ENCODE measurements at regions of chr2 and their contacts with region 1.

Region 1: DNA sequence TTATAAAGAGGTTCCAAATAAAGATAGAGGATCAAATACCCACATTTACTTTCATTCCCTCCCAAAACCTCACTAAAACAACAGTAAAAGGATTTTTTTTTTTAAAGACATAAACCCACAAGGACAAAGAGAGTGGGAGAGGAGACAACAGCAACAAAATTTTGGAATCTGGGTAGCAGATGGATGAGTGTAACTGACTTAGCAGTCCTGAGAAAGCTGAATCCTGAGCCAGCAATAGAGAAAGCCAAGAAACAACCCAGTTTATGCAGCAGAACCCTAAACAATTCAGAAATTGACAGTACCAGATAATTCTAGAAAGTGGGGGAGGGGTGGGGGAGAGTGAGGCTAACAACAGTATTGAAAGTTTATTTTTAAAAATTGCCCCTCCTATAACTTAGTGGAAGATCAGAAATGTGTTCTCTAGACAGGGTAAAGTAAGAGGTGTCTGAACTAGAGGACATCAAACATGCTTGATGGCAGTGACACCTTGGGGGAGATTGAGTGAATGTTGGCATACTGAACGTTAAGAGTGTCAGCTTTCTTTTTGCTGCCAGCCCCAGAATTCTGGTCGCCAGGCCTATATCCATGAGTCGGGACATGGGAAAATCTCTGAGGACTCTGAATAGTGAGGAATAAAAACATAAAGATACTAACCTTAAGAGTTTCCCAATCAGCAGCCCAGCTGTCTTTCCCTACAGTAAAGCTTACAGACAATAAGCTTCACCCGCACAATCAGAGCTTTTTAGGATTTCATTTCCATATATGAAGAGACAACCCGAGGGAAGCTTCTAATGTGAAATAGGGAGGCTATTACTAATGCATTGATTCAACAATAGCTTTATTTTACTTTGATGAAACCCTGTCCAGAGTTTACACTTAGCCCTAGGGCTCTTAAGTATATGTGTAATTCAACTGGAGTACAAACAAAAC is 128.0 kb upstream of the ALPP start:
- DNase-seq: no peak
- ATAC-seq: no peak
- H3K4me3 Mint-ChIP-seq: no peak overlapping the region
- H3K27ac Mint-ChIP-seq: no peak overlapping the region
- H3K4me1 Mint-ChIP-seq: no peaks in the 10 kb centered on the region
- H3K27me3 Mint-ChIP-seq: no peaks in the 10 kb centered on the region
- CTCF ChIP-seq: no peak

Region 2: DNA sequence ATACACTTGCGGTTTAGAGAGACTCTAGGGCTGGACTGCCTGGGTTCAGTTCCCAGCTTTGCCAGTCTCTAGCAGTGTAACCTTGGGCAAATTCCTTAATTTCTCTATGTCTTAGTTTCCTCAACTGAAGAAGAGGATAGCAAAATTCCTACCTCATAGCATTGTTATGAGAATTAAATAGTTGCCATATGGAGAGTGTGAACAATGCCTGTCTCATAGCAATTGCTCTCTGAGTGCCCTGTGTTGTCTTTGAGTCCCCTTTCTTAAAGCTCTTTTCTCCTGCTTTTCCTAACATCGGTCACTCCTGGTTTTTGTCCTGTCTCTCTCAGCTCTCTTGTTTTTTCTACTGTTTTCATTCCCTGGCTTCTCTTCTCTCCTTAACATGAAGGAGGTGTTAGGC is 11.3 kb after region 1 on chr2:
- CTCF ChIA-PET with region 1: no interaction called
- POLR2A ChIA-PET with region 1: no interaction called
- intact Hi-C with region 1: no loop called
- DNase-seq: no peak
- ATAC-seq: no peak
- H3K4me3 Mint-ChIP-seq: no peak overlapping the region
- H3K27ac Mint-ChIP-seq: no peak overlapping the region
- H3K4me1 Mint-ChIP-seq: no peaks in the 10 kb centered on the region
- H3K27me3 Mint-ChIP-seq: no peaks in the 10 kb centered on the region
- CTCF ChIP-seq: no peak

Region 3: GRCh38 chr2:232276084-232276732 is 25.7 kb after region 1 on chr2:
- CTCF ChIA-PET with region 1: no interaction called
- POLR2A ChIA-PET with region 1: interaction called, 13 read pairs
- intact Hi-C with region 1: no loop called
- DNase-seq: no peak
- ATAC-seq: no peak
- H3K4me3 Mint-ChIP-seq: no peak overlapping the region
- H3K27ac Mint-ChIP-seq: no peak overlapping the region
- H3K4me1 Mint-ChIP-seq: no peaks in the 10 kb centered on the region
- H3K27me3 Mint-ChIP-seq: no peaks in the 10 kb centered on the region
- CTCF ChIP-seq: no peak